ENCODE measurements at regions of chr1 and their contacts with region 1.

Region 1: GRCh38 chr1:198540580-198540979 is at the start of gene ATP6V1G3:
- DNase-seq: peak in 1 of 2 experiments; percentile 13
- H3K4me3 ChIP-seq: no peak within 1 kb of the TSS
- H3K4me3 Mint-ChIP-seq: no peak within 1 kb of the TSS
- H3K27ac Mint-ChIP-seq: no peak within 1 kb of the TSS
- H3K4me1 ChIP-seq: 0 out of 2 replicates have a peak, but pooled peaks cover 8% of the 10 kb centered on the region
- H3K4me1 Mint-ChIP-seq: no peaks in the 10 kb centered on the region
- H3K27me3 ChIP-seq: no peaks in the 10 kb centered on the region
- H3K27me3 Mint-ChIP-seq: no peaks in the 10 kb centered on the region
- CTCF ChIP-seq: no peak
- total RNA-seq, gene ATP6V1G3: 3.5 and 4.7 TPM in 2 replicates

Region 2: DNA sequence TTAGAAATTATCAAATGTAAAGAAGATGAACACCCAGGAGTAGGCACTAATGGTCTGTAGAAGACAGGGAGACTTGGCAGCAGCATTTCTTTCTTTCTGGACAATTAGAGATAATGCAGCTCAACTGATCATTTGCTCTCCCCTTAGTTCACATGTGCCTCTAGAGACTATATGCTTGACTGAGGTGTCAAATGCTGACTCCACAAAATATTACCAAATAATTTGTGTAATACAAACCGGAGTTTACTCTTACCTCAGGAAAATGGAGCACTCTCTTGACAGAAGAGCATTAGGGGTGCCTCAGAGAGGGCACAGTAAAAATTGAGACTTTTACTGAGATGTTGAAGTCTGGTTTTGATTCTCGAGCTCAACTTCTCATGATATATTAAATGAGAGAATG is 131.9 kb before region 1 on chr1:
- CTCF ChIA-PET with region 1: no interaction called
- POLR2A ChIA-PET with region 1: no interaction called
- intact Hi-C with region 1: no loop called
- DNase-seq: no peak
- H3K4me3 ChIP-seq: no peak overlapping the region
- H3K4me3 Mint-ChIP-seq: no peak overlapping the region
- H3K27ac Mint-ChIP-seq: no peak overlapping the region
- H3K4me1 ChIP-seq: no peaks in the 10 kb centered on the region
- H3K4me1 Mint-ChIP-seq: no peaks in the 10 kb centered on the region
- H3K27me3 ChIP-seq: no peaks in the 10 kb centered on the region
- H3K27me3 Mint-ChIP-seq: peaks cover 3% of the 10 kb centered on the region
- CTCF ChIP-seq: no peak

Region 3: GRCh38 chr1:198481661-198482060 is 58.9 kb before region 1 on chr1:
- CTCF ChIA-PET with region 1: no interaction called
- POLR2A ChIA-PET with region 1: no interaction called
- intact Hi-C with region 1: loop called (anchors 2 kb)
- DNase-seq: no peak
- H3K4me3 ChIP-seq: no peak overlapping the region
- H3K4me3 Mint-ChIP-seq: no peak overlapping the region
- H3K27ac Mint-ChIP-seq: no peak overlapping the region
- H3K4me1 ChIP-seq: no peaks in the 10 kb centered on the region
- H3K4me1 Mint-ChIP-seq: peaks cover 11% of the 10 kb centered on the region
- H3K27me3 ChIP-seq: no peaks in the 10 kb centered on the region
- H3K27me3 Mint-ChIP-seq: no peaks in the 10 kb centered on the region
- CTCF ChIP-seq: no peak

Region 4: GRCh38 chr1:198497346-198498102 is 43.1 kb before region 1 on chr1:
- CTCF ChIA-PET with region 1: no interaction called
- POLR2A ChIA-PET with region 1: no interaction called
- intact Hi-C with region 1: loop called (anchors 2 kb)
- DNase-seq: no peak
- H3K4me3 ChIP-seq: no peak overlapping the region
- H3K4me3 Mint-ChIP-seq: no peak overlapping the region
- H3K27ac Mint-ChIP-seq: no peak overlapping the region
- H3K4me1 ChIP-seq: peaks cover 16% of the 10 kb centered on the region
- H3K4me1 Mint-ChIP-seq: peaks cover 21% of the 10 kb centered on the region
- H3K27me3 ChIP-seq: no peaks in the 10 kb centered on the region
- H3K27me3 Mint-ChIP-seq: no peaks in the 10 kb centered on the region
- CTCF ChIP-seq: no peak

Region 5: DNA sequence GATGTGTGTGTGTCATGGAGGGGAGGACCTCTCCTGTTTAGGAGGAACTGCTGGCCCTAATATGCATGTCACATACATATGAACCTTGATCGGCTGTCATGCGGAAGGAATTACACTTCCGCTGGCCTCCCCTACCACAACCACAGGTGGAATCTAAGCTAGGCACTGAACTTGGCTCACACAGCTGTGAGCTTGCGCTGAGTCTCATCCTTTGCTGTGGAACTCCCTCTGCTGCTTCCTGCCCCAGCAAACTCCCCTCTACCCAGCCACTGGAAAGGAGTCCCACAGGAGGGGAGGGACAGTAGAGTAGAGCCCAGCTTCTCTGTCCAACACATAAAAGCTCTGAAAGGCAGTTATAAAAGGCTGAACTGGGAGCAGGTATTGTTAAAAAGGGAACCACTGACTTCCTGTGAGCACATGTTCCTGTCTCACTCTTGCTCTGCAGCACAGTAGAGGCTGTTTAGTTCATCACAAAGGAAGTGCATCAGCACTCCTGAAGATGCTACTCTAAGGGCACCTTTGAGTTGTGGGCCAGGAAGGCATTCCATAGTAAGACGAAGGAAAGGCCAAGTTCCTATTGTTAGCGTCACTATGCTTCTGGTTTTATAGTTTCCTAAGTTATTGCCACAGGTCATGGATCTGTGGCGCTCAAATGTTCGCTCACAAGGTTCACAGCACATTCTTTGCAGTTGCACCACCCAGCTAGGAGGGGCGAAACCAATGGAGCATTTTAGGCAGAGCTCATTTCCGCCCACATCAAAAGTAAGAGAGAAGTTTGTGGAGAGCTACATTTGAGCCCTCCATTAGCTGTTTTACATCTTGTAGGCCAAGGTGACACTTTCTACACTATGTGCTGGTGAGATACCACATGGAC is 80.6 kb after region 1 on chr1:
- CTCF ChIA-PET with region 1: no interaction called
- POLR2A ChIA-PET with region 1: no interaction called
- intact Hi-C with region 1: no loop called
- DNase-seq: no peak
- H3K4me3 ChIP-seq: no peak overlapping the region
- H3K4me3 Mint-ChIP-seq: no peak overlapping the region
- H3K27ac Mint-ChIP-seq: no peak overlapping the region
- H3K4me1 ChIP-seq: no peaks in the 10 kb centered on the region
- H3K4me1 Mint-ChIP-seq: no peaks in the 10 kb centered on the region
- H3K27me3 ChIP-seq: no peaks in the 10 kb centered on the region
- H3K27me3 Mint-ChIP-seq: peaks cover under 1% of the 10 kb centered on the region
- CTCF ChIP-seq: no peak

Measured in Caco-2 (cell line).